Activated CD8-positive, alpha-beta T cell treated with anti-CD3 and anti-CD28 coated beads, Interleukin-2, amount 10 ng/mL, durations not matched to agents 7 days and 5 days (primary cell): ENCODE measurements at regions of chr11 and their contacts with region 1.

Region 1: DNA sequence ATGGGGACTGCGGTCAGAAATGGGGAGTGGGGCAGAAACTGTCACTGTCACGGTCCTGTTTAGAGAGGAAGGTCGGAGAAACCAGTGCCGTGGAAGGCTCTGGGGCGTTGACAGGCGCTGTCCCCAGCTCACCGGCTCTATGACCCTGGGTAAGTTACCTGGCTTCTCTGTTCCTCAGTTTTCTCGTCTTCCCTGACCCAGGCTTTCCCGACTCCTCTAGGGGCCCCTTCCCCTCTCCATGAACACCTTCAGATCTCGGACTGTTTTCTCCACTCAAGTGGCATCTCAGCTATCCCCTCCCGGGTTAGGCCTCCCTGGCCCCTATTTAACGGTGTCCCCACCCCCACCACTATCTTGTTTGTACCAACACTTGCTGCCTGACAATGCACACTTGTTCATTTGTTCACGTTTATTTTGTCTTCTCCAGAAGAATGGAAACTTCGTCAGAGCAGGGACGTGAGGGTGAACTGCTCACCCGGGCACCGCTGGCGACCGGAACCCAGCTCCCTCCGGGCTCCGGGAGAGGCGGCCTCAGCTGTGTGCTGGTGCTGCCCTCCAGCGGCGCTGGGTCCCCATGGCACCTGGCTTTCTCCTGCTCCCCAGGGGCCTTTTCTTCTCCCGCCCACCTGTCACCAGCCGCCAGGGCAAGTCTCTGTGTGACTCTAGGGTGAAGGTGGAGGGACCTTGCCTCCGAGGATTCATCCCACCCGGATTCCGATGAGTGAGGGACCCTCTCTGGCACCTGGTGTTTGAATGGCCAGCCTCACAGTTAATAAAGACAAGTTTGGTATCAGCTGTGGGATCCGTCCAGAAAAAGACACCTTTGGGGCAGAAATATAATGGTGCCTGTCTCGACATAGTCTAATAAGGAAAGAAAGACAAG is 33.1 kb upstream of the SLC35C1 start:
- DNase-seq: peak; percentile 87
- ATAC-seq: peak; percentile 94
- H3K4me3 Mint-ChIP-seq: peak overlapping the region; percentile 75
- H3K27ac Mint-ChIP-seq: peak overlapping the region; percentile 63
- H3K4me1 Mint-ChIP-seq: peaks cover 14% of the 10 kb centered on the region
- H3K27me3 Mint-ChIP-seq: peaks cover 4% of the 10 kb centered on the region

Region 2: DNA sequence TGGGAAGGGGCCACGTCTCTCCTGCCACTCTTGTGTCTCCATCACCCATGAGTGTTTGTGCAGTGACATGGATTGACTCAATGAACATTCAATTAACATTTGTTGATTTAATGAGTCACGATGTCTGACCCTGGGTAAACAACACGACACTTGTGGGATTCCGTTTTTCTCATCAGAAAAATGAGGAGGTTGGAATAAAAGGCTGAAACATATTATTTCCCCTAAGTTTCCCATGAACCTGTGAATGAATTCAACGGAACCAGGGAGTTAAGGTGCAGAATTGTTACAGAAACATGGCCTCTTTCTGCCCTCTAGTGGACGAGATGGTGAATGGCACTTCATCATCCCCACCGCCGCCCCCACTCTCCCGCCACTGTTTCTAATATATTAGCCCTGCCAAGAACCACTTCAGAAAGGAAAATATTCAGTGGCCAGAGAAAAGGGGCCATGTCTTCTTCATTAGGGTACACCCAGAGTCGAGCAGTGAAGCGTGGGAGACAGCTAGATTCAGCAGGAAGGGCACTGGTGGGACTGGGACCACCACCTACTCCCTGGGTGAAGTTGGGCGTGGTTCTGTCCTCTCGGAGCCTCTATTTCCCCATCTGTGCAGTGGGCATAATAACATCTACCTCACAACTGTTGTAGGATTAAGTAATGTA is 439.4 kb before region 1 on chr11:
- CTCF ChIA-PET with region 1: interaction called, 27 read pairs
- POLR2A ChIA-PET with region 1: interaction called, 3 read pairs
- DNase-seq: peak; percentile 41
- ATAC-seq: no peak
- H3K4me3 Mint-ChIP-seq: no peak overlapping the region
- H3K27ac Mint-ChIP-seq: no peak overlapping the region
- H3K4me1 Mint-ChIP-seq: no peaks in the 10 kb centered on the region
- H3K27me3 Mint-ChIP-seq: peaks cover 4% of the 10 kb centered on the region

Region 3: GRCh38 chr11:45354976-45355705 is 416.7 kb before region 1 on chr11:
- CTCF ChIA-PET with region 1: interaction called, 11 read pairs
- POLR2A ChIA-PET with region 1: no interaction called
- DNase-seq: peak; percentile 88
- ATAC-seq: peak; percentile 89
- H3K4me3 Mint-ChIP-seq: peak overlapping the region; percentile 73
- H3K27ac Mint-ChIP-seq: peak overlapping the region; percentile 79
- H3K4me1 Mint-ChIP-seq: peaks cover 13% of the 10 kb centered on the region
- H3K27me3 Mint-ChIP-seq: peaks cover 22% of the 10 kb centered on the region

Region 4: GRCh38 chr11:45655347-45655756 is 116.5 kb before region 1 on chr11:
- CTCF ChIA-PET with region 1: interaction called, 23 read pairs
- POLR2A ChIA-PET with region 1: no interaction called
- DNase-seq: peak; percentile 68
- ATAC-seq: peak; percentile 70
- H3K4me3 Mint-ChIP-seq: no peak overlapping the region
- H3K27ac Mint-ChIP-seq: no peak overlapping the region
- H3K4me1 Mint-ChIP-seq: peaks cover 20% of the 10 kb centered on the region
- H3K27me3 Mint-ChIP-seq: peaks cover 23% of the 10 kb centered on the region

Region 5: GRCh38 chr11:45761659-45762058 is 10.1 kb before region 1 on chr11:
- CTCF ChIA-PET with region 1: interaction called, 12 read pairs
- POLR2A ChIA-PET with region 1: no interaction called
- DNase-seq: no peak
- ATAC-seq: no peak
- H3K4me3 Mint-ChIP-seq: no peak overlapping the region
- H3K27ac Mint-ChIP-seq: no peak overlapping the region
- H3K4me1 Mint-ChIP-seq: no peaks in the 10 kb centered on the region
- H3K27me3 Mint-ChIP-seq: peaks cover 5% of the 10 kb centered on the region

Region 6: DNA sequence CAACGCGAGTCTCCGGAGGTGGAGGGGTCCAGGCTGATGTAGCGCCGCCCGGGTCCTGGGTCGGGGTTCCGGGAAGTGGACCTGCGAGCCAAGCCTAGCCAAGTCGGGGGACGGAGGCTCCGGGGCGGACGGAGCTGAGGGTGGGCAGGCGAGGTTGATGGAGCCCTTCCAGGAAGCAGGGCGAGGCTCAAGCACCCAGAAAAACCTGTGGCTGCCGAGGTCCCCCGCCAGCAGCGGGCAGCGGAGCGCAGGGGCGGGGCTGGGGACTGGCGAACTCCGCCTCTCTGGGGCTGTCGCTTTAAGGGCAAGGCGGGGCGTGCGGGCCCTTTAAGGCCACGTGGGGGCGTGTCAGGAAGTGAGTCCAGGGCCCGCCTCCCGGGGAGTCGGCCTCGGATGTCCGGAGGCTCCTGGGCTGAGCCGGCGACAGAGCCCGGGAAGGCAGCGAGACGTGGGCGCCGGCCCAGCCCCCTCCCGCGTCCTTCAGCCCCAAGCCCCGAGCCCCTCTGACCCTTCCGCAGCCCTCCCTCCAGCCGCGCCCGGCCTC is 33.0 kb after region 1 on chr11 and contains the start of gene SLC35C1:
- CTCF ChIA-PET with region 1: interaction called, 33 read pairs
- POLR2A ChIA-PET with region 1: interaction called, 4 read pairs
- DNase-seq: peak; percentile 98
- ATAC-seq: peak; percentile 95
- H3K4me3 Mint-ChIP-seq: peak within 1 kb of the TSS; percentile 92
- H3K27ac Mint-ChIP-seq: peak within 1 kb of the TSS; percentile 93
- H3K4me1 Mint-ChIP-seq: peaks cover 42% of the 10 kb centered on the region
- H3K27me3 Mint-ChIP-seq: no peaks in the 10 kb centered on the region
- total RNA-seq, gene SLC35C1: 21.8 to 23.5 TPM

Region 7: DNA sequence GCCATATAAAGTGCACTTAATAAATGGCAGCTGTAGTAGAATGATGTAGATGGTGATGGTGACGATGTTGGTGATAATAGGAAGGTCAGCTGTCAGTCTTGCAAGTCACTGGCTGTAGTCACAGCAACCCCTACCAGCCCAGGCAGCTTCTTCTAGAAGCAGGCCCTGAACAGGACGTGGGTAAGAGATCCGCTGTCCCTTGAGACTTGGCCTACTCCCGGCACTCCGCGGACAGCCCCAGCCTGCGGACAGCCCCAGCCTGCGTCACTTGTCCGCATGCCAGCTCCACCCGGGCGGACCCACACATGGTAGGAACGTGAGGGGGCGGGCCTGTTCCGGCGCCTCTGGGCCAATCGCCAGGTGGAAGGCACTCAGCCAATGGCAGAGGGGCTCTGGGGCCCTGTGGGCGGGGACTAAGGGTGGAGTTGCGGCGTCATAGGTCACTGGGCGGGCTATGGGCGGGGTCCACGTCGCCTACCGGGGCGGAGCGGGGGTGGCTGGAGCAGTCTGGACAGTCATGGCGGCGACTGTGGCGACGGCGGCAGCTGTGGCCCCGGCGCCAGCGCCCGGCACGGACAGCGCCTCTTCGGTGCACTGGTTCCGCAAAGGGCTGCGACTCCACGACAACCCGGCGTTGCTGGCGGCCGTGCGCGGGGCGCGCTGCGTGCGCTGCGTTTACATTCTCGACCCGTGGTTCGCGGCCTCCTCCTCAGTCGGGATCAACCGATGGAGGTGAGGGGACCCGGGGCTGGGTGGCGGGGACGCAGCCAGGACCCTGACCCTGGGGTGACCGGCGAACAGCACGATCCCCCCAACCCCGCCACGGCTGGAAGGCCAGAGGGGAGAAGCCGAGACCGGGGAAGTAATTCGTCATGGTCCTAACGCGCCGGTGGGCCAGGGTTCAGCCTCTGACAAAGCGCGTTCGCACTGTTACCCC is 75.4 kb after region 1 on chr11 and contains the start of gene CRY2:
- CTCF ChIA-PET with region 1: interaction called, 10 read pairs
- POLR2A ChIA-PET with region 1: no interaction called
- DNase-seq: peak; percentile 98
- ATAC-seq: peak; percentile 87
- H3K4me3 Mint-ChIP-seq: peak within 1 kb of the TSS; percentile 77
- H3K27ac Mint-ChIP-seq: peak within 1 kb of the TSS; percentile 86
- H3K4me1 Mint-ChIP-seq: peaks cover 49% of the 10 kb centered on the region
- H3K27me3 Mint-ChIP-seq: peaks cover 15% of the 10 kb centered on the region
- total RNA-seq, gene CRY2: 24.4 to 28.1 TPM